ENCODE measurements at regions of chr4 and their contacts with region 1.

Region 1: GRCh38 chr4:163620732-163621131 is 126.2 kb downstream of the TMA16 start:
- DNase-seq: no peak
- ATAC-seq: no peak

Region 2: DNA sequence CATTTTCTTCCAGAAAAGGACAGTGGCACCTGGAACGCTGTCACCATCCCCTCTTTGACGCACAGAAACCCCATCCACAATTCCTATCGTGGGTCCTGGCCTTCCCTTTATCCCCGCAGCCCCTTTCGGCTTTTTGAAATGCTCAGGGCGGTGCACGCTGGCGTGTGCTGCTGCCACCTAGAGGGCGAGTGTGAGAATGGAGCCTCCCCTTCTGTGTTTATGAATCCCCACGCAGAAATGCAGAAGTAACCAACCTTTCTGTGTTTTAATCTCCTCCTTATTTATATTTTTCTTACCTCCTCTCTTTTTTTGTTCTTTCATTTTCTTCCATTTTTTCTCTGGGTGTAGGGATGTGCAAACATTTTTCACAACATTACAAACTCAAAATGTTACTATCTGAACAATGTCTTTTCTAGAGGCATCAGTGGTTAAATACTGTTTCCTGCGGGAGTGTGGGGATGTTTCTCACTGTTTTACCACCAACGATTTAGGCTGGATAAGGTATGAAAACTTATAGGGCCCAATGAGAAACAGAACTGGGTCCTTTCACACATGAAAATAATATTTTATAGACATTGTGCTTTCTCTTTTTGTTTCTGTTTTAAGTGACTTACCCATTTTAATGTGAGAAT is 76.2 kb before region 1 on chr4:
- intact Hi-C with region 1: no loop called
- DNase-seq: no peak
- ATAC-seq: peak; percentile 73

Region 3: DNA sequence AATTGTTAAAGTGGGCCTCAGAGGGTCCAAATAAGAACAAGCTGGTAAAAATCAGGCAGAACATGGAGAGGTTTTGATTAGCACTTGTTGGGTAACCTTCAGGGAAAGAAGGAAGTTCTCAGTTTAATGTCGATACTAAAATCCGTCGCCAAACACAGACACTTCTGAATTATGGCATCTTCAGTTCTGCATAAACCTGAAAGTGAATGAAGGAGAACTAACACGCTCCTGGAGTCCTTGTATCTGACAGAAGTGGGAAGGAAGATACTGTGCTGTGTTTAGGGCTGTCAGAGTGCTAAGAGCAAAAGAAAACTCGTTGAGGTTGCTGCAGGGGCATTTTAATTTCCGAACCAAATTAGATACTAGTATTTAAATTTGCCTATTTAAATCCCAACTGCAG is 20.0 kb before region 1 on chr4:
- intact Hi-C with region 1: loop called (anchors 1 kb)
- DNase-seq: no peak
- ATAC-seq: peak; percentile 31

Region 4: GRCh38 chr4:163663454-163664225 is 42.9 kb after region 1 on chr4:
- intact Hi-C with region 1: no loop called
- DNase-seq: no peak
- ATAC-seq: no peak

Measured in Right ventricle myocardium inferior (tissue), 1 donor.